Activated CD4-positive, alpha-beta memory T cell treated with anti-CD3 and anti-CD28 coated beads for 36 hours (primary cell): ENCODE measurements at regions of chr16 and their contacts with region 1.

Region 1: DNA sequence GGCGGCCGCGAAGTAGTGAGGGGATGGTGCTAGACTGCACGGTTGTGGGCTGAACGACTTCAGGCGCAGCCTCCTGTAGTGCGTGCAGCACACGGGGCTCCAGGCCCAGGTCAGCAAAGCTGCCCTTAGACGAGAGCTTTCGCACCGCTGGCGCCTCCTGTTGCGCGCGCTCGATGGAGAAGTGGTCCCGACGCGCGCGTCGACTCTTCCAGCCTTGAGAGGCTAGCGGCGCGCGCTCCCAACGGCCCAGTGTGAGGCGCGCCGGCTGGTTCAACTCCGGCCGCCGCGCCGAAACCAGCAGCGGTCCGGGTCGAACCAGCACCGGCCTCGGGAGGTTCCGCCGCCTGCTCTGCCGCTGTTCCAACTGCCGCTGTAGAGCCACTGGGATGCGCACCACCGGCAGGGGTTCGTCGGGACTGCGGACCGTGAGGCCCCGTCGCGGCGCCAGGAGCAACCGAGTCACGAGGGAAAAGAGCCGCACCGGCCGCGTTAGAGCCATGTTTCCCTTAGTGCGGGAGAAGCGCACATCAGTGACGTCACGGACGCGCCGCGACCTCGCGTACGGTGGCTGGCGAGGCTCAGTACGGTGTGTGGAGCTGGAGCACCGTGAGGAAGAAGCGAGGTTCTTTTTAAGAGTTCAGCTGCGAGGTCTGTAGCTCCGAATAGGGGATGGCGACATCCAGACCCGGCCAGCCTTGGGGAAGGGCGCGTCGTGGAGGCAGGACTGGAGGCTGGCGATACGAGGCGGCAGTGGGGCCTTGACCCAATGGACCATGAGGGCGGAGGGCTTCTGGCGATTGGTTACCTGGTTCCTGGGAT is at the starts of genes DDX28 and DUS2:
- DNase-seq: peak; percentile 97
- H3K4me3 Mint-ChIP-seq: peak within 1 kb of the TSS; percentile 95
- H3K27ac Mint-ChIP-seq: peak within 1 kb of the TSS; percentile 94
- H3K4me1 Mint-ChIP-seq: peaks cover 26% of the 10 kb centered on the region
- H3K27me3 Mint-ChIP-seq: no peaks in the 10 kb centered on the region
- total RNA-seq, gene DDX28: 12.8 to 14.5 TPM
- total RNA-seq, gene DUS2: 29.2 to 29.4 TPM

Region 2: DNA sequence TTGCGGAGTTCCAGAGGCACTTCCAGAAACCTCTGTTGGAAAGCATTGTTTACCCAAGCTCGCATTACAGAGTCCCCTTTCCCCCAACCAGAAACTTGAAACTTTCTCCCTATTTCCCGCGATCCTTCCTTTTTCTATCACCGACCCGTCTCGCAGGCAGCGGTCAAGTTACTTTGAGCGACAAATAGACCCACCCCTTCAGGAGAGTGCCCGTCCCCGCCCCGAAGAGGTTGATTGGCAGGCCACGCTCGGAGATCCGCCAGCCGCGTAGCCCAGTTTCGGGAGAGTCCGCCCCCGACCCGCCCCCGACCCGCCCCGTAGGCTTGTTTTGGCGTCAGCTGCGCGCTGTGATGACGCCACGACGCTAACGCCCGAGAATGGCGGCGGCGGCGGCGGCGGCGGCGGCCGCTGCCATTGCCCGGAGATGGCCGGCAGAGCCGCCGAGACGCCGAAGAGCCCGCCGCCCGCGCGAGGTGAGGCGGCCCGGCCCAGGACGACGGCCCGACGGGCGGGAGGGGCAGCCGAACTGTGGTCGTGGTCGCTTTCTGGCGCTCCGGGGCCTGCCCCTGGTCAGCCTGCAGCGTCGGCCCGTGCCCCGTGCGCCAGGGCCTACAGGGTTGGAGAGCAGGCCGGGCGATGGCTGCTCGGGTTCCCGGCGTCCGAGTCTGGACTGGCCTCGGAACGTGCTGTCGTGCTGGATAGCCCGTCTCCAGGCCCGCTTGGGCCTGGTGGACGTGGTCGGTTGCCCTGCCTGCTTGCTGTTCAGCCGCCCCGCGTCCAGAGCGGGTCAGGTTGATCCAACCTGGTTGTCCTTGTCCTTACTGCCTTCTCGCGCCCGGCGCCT is 129.8 kb before region 1 on chr16 and contains the start of gene PSKH1:
- CTCF ChIA-PET with region 1: no interaction called
- POLR2A ChIA-PET with region 1: no interaction called
- intact Hi-C with region 1: loop called (anchors 2 kb)
- DNase-seq: peak; percentile 98
- H3K4me3 Mint-ChIP-seq: peak within 1 kb of the TSS; percentile 96
- H3K27ac Mint-ChIP-seq: peak within 1 kb of the TSS; percentile 89
- H3K4me1 Mint-ChIP-seq: peaks cover 29% of the 10 kb centered on the region
- H3K27me3 Mint-ChIP-seq: no peaks in the 10 kb centered on the region
- total RNA-seq, gene PSKH1: 10.0 to 11.7 TPM

Region 3: GRCh38 chr16:67993189-67994039 is 29.5 kb before region 1 on chr16:
- CTCF ChIA-PET with region 1: interaction called, 9 read pairs
- POLR2A ChIA-PET with region 1: interaction called, 10 read pairs
- intact Hi-C with region 1: loop called (anchors 2 kb)
- DNase-seq: peak; percentile 90
- H3K4me3 Mint-ChIP-seq: peak overlapping the region; percentile 73
- H3K27ac Mint-ChIP-seq: peak overlapping the region; percentile 94
- H3K4me1 Mint-ChIP-seq: peaks cover 37% of the 10 kb centered on the region
- H3K27me3 Mint-ChIP-seq: no peaks in the 10 kb centered on the region

Region 4: GRCh38 chr16:67999985-68000384 is 22.9 kb before region 1 on chr16:
- CTCF ChIA-PET with region 1: interaction called, 3 read pairs
- POLR2A ChIA-PET with region 1: interaction called, 10 read pairs
- intact Hi-C with region 1: no loop called
- DNase-seq: no peak
- H3K4me3 Mint-ChIP-seq: peak overlapping the region; percentile 72
- H3K27ac Mint-ChIP-seq: peak overlapping the region; percentile 88
- H3K4me1 Mint-ChIP-seq: peaks cover 52% of the 10 kb centered on the region
- H3K27me3 Mint-ChIP-seq: no peaks in the 10 kb centered on the region

Region 5: DNA sequence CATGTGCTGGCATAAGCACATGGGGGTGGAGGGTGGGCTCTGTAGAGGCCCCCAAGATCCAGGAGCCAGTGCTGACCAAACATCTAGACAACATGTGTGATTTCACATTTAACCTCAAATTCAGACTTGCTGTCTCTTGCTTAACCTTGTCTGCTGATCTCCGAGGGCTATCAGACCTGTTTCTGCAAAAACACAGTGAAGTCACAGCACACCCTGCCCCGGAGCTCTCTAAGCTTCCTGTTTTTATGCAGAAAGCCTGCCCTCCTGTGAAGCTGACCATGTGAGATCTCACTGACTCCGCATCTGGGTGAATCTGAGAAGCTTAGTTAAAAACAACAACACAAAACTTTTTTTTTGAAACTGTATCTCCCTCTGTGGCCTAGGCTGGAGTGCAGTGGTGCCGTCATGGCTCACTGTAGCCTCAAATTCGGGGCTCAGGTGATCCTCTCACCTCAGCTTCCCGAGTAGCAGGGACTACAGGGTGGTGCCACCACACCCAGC is 17.1 kb before region 1 on chr16:
- CTCF ChIA-PET with region 1: interaction called, 6 read pairs
- POLR2A ChIA-PET with region 1: interaction called, 17 read pairs
- intact Hi-C with region 1: no loop called
- DNase-seq: peak; percentile 55
- H3K4me3 Mint-ChIP-seq: no peak overlapping the region
- H3K27ac Mint-ChIP-seq: peak overlapping the region; percentile 78
- H3K4me1 Mint-ChIP-seq: peaks cover 29% of the 10 kb centered on the region
- H3K27me3 Mint-ChIP-seq: no peaks in the 10 kb centered on the region

Region 6: GRCh38 chr16:68319185-68319908 is 296.4 kb after region 1 on chr16:
- CTCF ChIA-PET with region 1: no interaction called
- POLR2A ChIA-PET with region 1: no interaction called
- intact Hi-C with region 1: no loop called
- DNase-seq: peak; percentile 83
- H3K4me3 Mint-ChIP-seq: no peak overlapping the region
- H3K27ac Mint-ChIP-seq: peak overlapping the region; percentile 73
- H3K4me1 Mint-ChIP-seq: peaks cover 25% of the 10 kb centered on the region
- H3K27me3 Mint-ChIP-seq: no peaks in the 10 kb centered on the region